Gastrocnemius medialis (tissue), 4 donors: ENCODE measurements at regions of chr9 and their contacts with region 1.

Region 1: DNA sequence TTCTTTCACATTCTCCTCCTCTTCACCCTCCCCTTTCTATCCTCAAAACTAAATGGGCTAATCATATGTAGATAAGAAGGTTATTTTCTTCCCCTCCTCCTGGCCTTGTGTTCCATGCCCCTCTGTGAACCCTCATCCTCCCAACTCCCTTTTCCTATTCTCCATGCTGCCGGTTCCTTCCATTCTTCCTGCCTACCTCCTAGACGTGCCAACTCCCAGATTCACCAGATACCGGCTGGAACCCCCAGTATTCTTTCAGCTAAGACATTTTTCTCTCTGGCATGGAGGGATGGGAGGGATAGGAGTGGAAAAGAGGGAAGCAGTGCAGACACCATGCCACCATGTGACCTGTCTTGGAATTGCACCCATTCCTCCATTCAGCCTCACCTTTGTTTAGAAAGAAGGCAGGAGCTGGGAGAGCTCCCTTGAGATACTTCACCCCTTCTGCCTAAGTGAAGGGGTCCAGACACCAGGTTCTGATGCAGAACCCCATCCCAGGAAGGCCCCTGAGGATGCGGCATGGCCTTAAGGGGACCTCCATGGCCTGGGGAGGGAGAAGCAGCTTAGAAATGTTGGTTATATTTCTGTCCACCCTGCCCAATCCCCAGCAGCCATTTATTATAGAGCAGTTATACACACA is 4.8 kb downstream of the DNAJB5 start:
- DNase-seq: peak in 1 of 2 donors; percentile 67
- ATAC-seq: peak; percentile 8 to 10
- H3K4me3 ChIP-seq: peak overlapping the region; percentile 58 to 73 (median 67)
- H3K27ac ChIP-seq: peak overlapping the region in 1 of 4 donors; percentile 93
- H3K4me1 ChIP-seq: peaks cover 45 to 55% of the 10 kb centered on the region in 2 donors
- H3K27me3 ChIP-seq: no peaks in the 10 kb centered on the region
- CTCF ChIP-seq: peak; percentile 39 to 74 (median 53)
- POLR2A ChIP-seq: no peak

Region 2: DNA sequence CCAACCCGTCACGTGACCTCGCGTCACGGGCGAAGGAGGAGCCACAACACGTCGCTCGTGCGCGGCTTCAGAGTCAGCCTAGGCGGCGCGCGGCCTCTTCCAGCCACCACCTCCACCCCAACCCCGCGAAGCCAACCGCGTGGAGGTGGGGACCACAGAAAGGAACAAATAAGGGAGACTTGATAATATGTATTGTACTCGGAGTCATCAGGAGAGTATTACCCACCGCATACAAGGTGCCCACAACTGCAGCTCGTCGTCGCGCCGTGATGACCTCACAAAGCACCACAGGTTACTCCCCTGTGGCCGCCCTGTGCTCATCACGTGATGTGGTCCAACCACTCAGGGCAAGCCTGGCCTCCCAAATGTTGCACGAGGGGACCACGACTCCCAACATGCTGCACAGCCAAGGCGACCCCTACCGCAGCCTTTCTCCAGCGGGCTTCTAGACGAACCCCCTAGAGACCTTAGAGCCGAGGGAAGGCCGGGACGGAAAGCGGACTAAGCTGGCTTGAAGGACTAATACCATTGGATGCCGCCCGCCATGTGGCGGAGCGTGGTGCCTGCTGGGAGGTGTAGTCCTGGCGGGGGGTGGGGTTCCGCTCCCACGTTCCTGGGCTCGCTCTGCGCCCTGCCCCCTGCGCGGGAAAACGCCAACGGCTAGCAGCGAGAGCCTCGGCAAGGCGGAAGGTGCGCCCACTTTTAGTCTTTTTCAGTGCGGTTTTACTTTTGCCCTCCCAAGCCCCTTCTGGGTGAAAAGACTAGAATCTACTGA is 945.3 kb before region 1 on chr9:
- in situ Hi-C with region 1: no loop called
- intact Hi-C with region 1: loop called (anchors 10 kb)
- DNase-seq: peak; percentile 96 to 97
- ATAC-seq: peak; percentile 95 to 96
- H3K4me3 ChIP-seq: peak overlapping the region; percentile 74 to 90 (median 85)
- H3K27ac ChIP-seq: peak overlapping the region; percentile 90 to 97 (median 94)
- H3K4me1 ChIP-seq: peaks cover 19 to 22% of the 10 kb centered on the region in 2 donors
- H3K27me3 ChIP-seq: no peaks in the 10 kb centered on the region
- CTCF ChIP-seq: peak in 3 of 5 experiments; percentile 9 to 55 (median 32)
- POLR2A ChIP-seq: peak in 1 of 2 donors; percentile 8

Region 3: GRCh38 chr9:35111001-35111933 is 116.9 kb after region 1 on chr9:
- in situ Hi-C with region 1: no loop called
- intact Hi-C with region 1: loop called (anchors 1 kb)
- DNase-seq: peak; percentile 98 to 99
- ATAC-seq: peak; percentile 80 to 83
- H3K4me3 ChIP-seq: peak overlapping the region; percentile 75 to 91 (median 86)
- H3K27ac ChIP-seq: peak overlapping the region; percentile 91 to 96 (median 94)
- H3K4me1 ChIP-seq: peaks cover 26 to 38% of the 10 kb centered on the region in 2 donors
- H3K27me3 ChIP-seq: no peaks in the 10 kb centered on the region
- CTCF ChIP-seq: no peak
- POLR2A ChIP-seq: peak; percentile 95

Region 4: DNA sequence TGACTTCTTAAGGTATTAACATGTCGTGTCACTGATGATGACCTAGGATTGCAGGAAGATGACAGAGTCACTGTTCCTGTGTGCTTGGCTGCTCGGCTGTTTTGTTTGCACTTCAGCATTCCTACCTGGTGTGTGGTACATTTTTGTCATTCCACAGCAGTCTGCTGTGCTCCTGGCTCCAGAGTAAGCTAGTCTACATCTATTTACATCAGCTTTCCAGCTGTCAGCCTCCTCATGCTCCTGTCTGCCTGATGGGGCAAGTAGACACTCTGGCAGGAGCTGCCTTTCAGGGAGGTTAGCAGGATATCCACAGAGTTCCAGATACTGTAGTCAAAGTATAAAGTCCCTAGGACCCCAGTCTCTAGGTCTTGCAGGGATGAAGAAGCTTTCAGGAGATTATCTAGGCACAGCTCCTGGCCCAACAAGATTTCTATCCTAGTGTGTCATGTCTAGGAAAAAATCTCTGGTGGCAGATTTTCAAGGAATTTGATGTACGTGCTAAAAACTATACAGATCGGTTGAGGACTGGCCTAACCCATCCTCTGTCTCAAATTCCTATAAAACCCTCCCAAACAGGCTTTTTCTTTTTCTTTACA is 523.9 kb after region 1 on chr9:
- in situ Hi-C with region 1: no loop called
- intact Hi-C with region 1: loop called (anchors 2 kb)
- DNase-seq: peak; percentile 28 to 69
- ATAC-seq: peak; percentile 12 to 26
- H3K4me3 ChIP-seq: no peak overlapping the region
- H3K27ac ChIP-seq: peak overlapping the region; percentile 86 to 95 (median 89)
- H3K4me1 ChIP-seq: peaks cover 94 to 96% of the 10 kb centered on the region in 2 donors
- H3K27me3 ChIP-seq: no peaks in the 10 kb centered on the region
- CTCF ChIP-seq: no peak
- POLR2A ChIP-seq: peak; percentile 4 to 39

Region 5: GRCh38 chr9:35657546-35658136 is 663.3 kb after region 1 on chr9 and contains the start of gene RMRP:
- in situ Hi-C with region 1: no loop called
- intact Hi-C with region 1: loop called (anchors 10 kb)
- DNase-seq: peak; percentile 97 to 98
- ATAC-seq: peak; percentile 91 to 96
- H3K4me3 ChIP-seq: peak within 1 kb of the TSS; percentile 79 to 85 (median 82)
- H3K27ac ChIP-seq: peak within 1 kb of the TSS; percentile 92 to 97 (median 96)
- H3K4me1 ChIP-seq: peaks cover 28 to 29% of the 10 kb centered on the region in 2 donors
- H3K27me3 ChIP-seq: no peaks in the 10 kb centered on the region
- CTCF ChIP-seq: peak; percentile 44 to 56 (median 52)
- POLR2A ChIP-seq: peak; percentile 56 to 61
- total RNA-seq, gene RMRP: 115 to 715 (median 367) TPM

Region 6: DNA sequence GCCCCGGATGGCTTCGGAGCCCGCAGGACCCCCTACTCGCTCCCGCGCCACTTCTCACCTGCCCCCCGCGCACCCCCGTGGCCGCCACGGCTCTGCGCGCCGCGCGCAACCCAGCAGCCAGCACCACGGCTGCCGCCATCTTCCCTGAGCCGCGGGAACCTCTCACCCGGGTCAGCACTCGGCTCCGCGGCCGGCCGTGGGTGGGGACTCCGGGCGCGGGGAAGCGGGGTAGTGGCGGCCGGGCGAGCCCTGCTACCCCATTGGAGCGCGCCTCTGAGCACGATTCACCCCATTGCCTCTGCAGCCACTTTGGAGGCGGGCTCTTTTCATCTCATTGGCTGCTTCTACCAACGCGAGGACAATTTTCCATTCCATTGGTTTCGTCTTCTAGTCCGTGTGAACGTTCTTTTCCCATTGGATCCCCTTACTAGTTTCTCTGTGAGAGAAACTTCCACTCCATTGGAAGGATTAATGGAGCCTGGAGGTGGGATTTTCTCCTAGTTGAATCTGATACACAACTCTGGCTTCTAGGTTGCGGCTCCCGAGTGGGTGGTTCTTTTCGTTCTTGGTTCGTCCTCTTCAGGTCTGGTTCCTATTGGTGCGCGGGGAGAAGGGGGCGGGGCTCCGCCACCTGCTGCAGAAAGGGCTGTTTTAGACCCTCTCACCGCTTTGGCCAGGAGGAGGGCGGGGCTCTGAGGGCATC is 820.6 kb after region 1 on chr9 and contains the start of gene HINT2:
- in situ Hi-C with region 1: no loop called
- intact Hi-C with region 1: loop called (anchors 10 kb)
- DNase-seq: peak; percentile 95 to 98
- ATAC-seq: peak; percentile 87 to 95
- H3K4me3 ChIP-seq: peak within 1 kb of the TSS; percentile 78 to 93 (median 84)
- H3K27ac ChIP-seq: peak within 1 kb of the TSS; percentile 95 to 98 (median 96)
- H3K4me1 ChIP-seq: peaks cover 30 to 34% of the 10 kb centered on the region in 2 donors
- H3K27me3 ChIP-seq: no peaks in the 10 kb centered on the region
- CTCF ChIP-seq: peak in 1 of 5 experiments; percentile 3
- POLR2A ChIP-seq: peak; percentile 92 to 94
- total RNA-seq, gene HINT2: 4.5 to 26.7 (median 22.0) TPM